ENCODE measurements at regions of chr12 and their contacts with region 1.

Region 1: DNA sequence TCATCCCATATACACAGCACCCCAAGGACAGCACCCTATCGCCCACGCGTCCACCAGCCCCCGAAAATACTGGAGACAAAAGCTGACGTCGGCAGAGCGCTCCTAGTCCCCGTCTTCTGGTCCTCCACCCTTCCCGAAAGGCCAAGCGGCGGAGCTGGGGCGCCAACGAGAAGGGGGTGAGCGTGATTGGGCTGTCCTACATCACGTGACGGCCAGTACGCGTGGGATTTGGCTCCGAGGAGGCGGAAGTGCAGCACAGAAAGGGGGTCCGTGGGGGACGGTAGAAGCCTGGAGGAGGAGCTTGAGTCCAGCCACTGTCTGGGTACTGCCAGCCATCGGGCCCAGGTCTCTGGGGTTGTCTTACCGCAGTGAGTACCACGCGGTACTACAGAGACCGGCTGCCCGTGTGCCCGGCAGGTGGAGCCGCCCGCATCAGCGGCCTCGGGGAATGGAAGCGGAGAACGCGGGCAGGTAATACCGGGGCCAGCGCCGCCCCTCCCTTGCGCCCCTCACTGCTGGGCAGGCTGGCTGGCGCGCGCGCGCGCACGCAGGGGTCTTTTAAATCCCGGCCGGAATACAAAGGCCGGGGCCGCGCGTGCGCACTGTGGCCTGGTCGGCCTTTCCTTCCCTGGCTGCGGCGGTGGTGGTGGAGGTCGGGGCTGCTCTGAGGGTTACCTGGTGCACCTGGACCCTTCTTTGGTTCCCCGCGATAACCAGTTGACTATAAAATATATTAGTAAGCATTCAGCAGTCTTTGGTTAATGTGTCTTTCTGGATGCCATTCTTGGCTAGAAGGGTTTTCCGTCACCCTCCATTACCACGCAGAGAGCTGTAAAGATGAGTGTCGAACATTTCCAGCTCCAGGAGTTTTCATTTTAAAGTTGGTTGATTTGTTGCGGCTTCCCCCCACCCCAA is at the start of gene TDG:
- DNase-seq: peak; percentile 99
- ATAC-seq: peak; percentile 94
- H3K4me3 Mint-ChIP-seq: peak within 1 kb of the TSS; percentile 94
- H3K27ac Mint-ChIP-seq: peak within 1 kb of the TSS; percentile 98
- H3K4me1 Mint-ChIP-seq: peaks cover 48% of the 10 kb centered on the region
- H3K27me3 Mint-ChIP-seq: no peaks in the 10 kb centered on the region
- total RNA-seq, gene TDG: 35.4 to 37.2 TPM

Region 2: GRCh38 chr12:102061560-102062418 is 1904.1 kb before region 1 on chr12 and contains the start of gene WASHC3:
- CTCF ChIA-PET with region 1: no interaction called
- POLR2A ChIA-PET with region 1: no interaction called
- intact Hi-C with region 1: loop called in 1 of 2 experiments (anchors 5 kb)
- DNase-seq: peak; percentile 98
- ATAC-seq: peak; percentile 93
- H3K4me3 Mint-ChIP-seq: peak within 1 kb of the TSS; percentile 94
- H3K27ac Mint-ChIP-seq: peak within 1 kb of the TSS; percentile 99
- H3K4me1 Mint-ChIP-seq: peaks cover 29% of the 10 kb centered on the region
- H3K27me3 Mint-ChIP-seq: no peaks in the 10 kb centered on the region
- total RNA-seq, gene WASHC3: 36.1 to 64.4 TPM

Region 3: DNA sequence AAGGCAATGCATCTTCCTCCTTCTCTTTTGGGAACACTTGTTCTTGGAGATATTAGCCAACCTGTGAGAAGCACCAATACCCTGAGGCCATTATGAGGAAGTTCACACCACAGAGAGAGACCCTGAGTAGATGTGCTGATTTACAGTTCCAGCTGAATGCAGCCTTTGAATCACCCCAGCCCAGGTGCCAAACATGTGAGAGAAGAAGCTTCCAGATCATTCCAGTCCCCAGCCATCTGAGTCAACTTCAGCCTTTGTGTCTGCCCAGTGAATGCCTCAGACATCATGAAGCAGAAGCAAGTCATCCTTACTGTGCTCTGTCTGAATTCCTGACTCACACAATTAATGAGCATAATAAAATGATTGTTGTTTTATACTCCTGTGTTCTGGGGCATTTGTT is 495.2 kb before region 1 on chr12:
- CTCF ChIA-PET with region 1: no interaction called
- POLR2A ChIA-PET with region 1: no interaction called
- intact Hi-C with region 1: no loop called
- DNase-seq: no peak
- ATAC-seq: no peak
- H3K4me3 Mint-ChIP-seq: no peak overlapping the region
- H3K27ac Mint-ChIP-seq: no peak overlapping the region
- H3K4me1 Mint-ChIP-seq: no peaks in the 10 kb centered on the region
- H3K27me3 Mint-ChIP-seq: no peaks in the 10 kb centered on the region

Region 4: GRCh38 chr12:103884316-103884715 is 81.5 kb before region 1 on chr12:
- CTCF ChIA-PET with region 1: interaction called, 5 read pairs
- POLR2A ChIA-PET with region 1: no interaction called
- intact Hi-C with region 1: loop called (anchors 2 to 5 kb)
- DNase-seq: peak; percentile 66
- ATAC-seq: peak; percentile 57
- H3K4me3 Mint-ChIP-seq: no peak overlapping the region
- H3K27ac Mint-ChIP-seq: no peak overlapping the region
- H3K4me1 Mint-ChIP-seq: peaks cover 18% of the 10 kb centered on the region
- H3K27me3 Mint-ChIP-seq: no peaks in the 10 kb centered on the region

Region 5: DNA sequence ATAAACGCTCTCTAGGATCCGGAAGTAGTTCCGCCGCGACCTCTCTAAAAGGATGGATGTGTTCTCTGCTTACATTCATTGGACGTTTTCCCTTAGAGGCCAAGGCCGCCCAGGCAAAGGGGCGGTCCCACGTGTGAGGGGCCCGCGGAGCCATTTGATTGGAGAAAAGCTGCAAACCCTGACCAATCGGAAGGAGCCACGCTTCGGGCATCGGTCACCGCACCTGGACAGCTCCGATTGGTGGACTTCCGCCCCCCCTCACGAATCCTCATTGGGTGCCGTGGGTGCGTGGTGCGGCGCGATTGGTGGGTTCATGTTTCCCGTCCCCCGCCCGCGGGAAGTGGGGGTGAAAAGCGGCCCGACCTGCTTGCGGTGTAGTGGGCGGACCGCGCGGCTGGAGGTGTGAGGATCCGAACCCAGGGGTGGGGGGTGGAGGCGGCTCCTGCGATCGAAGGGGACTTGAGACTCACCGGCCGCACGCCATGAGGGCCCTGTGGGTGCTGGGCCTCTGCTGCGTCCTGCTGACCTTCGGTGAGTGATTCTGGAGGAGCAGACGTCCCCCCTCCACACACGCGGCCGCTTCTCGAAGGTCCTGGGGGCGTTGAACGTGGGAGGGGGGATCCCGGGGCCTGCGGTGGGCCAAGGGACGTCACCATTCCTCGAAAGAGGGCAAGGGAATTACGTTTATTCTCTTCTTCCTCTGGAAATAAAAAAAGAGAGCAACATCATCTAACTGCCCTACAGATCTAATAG is 35.6 kb before region 1 on chr12 and contains the start of gene HSP90B1:
- CTCF ChIA-PET with region 1: interaction called, 13 read pairs
- POLR2A ChIA-PET with region 1: interaction called, 50 read pairs
- intact Hi-C with region 1: loop called (anchors 1 kb)
- DNase-seq: peak; percentile 100
- ATAC-seq: peak; percentile 75
- H3K4me3 Mint-ChIP-seq: peak within 1 kb of the TSS; percentile 77
- H3K27ac Mint-ChIP-seq: peak within 1 kb of the TSS; percentile 100
- H3K4me1 Mint-ChIP-seq: peaks cover 54% of the 10 kb centered on the region
- H3K27me3 Mint-ChIP-seq: no peaks in the 10 kb centered on the region
- total RNA-seq, gene HSP90B1: 384 to 394 TPM

Region 6: DNA sequence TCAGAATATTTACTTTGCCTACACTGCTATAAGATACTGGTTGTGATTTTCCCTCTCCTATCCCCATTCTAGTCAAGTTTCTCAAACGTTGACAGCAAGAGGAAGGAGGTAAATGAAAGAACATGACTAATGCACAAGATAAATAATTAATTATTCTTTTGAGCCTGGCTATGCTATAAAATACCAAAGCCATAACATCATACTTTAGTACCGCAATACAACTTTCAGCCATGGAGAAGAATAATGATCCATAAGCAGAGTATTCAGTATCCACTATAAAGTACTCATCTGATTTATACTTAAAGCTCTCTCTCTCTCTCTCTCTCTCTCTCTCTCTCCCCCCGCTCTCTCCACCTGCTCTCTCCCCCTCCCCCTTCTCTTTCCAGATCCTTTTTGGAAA is 41.1 kb after region 1 on chr12:
- CTCF ChIA-PET with region 1: no interaction called
- POLR2A ChIA-PET with region 1: no interaction called
- intact Hi-C with region 1: no loop called
- DNase-seq: no peak
- ATAC-seq: no peak
- H3K4me3 Mint-ChIP-seq: no peak overlapping the region
- H3K27ac Mint-ChIP-seq: no peak overlapping the region
- H3K4me1 Mint-ChIP-seq: no peaks in the 10 kb centered on the region
- H3K27me3 Mint-ChIP-seq: peaks cover 16% of the 10 kb centered on the region

Region 7: DNA sequence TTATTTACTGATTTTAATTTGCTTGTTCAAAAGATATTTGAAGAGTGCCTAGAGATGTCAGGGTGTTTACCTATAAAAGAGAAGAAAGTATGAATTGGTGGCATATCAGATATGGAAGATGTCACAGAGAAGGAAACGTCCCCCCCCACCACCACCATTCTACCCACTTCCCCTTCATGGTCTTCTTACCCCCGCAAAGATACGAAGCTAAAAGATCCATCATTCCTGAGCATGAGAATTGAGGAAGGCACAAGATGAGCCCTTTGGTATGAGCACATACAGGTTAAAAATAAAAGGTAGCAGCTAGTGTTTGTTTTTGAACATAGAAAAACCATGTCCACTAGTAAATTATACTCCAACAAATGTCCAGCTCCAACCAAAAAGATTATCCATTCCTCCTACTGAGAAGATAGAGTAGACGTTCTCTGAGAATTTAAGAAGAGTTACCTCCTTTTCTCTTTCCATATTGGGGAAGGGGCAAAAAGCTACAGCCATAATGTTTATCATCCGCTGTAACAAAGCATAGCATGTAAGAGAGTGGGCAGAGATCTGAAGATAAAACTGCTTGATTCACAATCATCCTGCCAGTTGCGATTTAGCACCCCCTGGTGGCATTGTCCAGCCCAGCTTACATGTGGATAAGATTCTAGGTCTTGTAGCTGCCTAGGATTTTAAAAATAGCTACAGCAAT is 143.1 kb after region 1 on chr12:
- CTCF ChIA-PET with region 1: interaction called, 10 read pairs
- POLR2A ChIA-PET with region 1: no interaction called
- intact Hi-C with region 1: loop called in 1 of 2 experiments (anchors 10 kb)
- DNase-seq: peak; percentile 94
- ATAC-seq: peak; percentile 99
- H3K4me3 Mint-ChIP-seq: no peak overlapping the region
- H3K27ac Mint-ChIP-seq: peak overlapping the region; percentile 44
- H3K4me1 Mint-ChIP-seq: peaks cover 7% of the 10 kb centered on the region
- H3K27me3 Mint-ChIP-seq: no peaks in the 10 kb centered on the region

Region 8: DNA sequence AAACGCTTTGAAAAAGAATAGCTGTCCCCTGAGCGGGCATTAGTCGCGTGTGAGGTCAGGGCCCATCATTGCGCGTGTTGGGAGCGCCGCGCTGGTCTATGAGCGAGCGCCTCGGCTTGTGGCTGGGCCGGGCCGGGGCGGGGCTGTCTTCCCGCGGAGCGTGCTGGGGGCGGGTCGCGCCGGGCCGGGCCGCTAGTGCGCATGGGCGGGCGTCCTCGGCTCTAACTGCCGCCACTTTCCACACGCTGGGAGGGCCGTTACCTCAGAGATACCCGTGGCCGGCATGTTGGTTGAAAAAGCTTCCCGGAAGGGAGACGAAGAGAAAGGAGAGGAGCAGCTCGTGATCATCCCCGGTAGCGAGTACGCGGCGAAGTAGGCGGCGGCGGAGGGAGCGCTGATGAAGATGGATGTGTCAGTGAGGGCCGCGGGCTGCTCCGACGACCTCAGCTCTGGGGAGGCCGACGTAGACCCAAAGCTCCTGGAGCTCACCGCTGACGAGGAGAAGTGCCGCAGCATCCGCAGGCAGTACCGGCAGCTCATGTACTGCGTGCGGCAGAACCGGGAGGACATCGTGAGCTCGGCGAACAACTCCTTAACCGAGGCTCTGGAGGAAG is 337.8 kb after region 1 on chr12 and contains the start of gene EID3:
- CTCF ChIA-PET with region 1: no interaction called
- POLR2A ChIA-PET with region 1: no interaction called
- intact Hi-C with region 1: loop called in 1 of 2 experiments (anchors 5 kb)
- DNase-seq: peak; percentile 95
- ATAC-seq: peak; percentile 97
- H3K4me3 Mint-ChIP-seq: peak within 1 kb of the TSS; percentile 81
- H3K27ac Mint-ChIP-seq: peak within 1 kb of the TSS; percentile 96
- H3K4me1 Mint-ChIP-seq: peaks cover 57% of the 10 kb centered on the region
- H3K27me3 Mint-ChIP-seq: no peaks in the 10 kb centered on the region
- total RNA-seq, gene EID3: 3.9 to 4.6 TPM